Activated CD4-positive, alpha-beta T cell treated with anti-CD3 and anti-CD28 coated beads for 36 hours (primary cell): ENCODE measurements at regions of chr21 and their contacts with region 1.

Region 1: GRCh38 chr21:42238185-42238934 is 19.4 kb downstream of the ABCG1 start:
- DNase-seq: peak; percentile 61
- ATAC-seq: peak; percentile 7
- H3K4me3 Mint-ChIP-seq: peak overlapping the region; percentile 50
- H3K27ac Mint-ChIP-seq: peak overlapping the region; percentile 92
- H3K4me1 Mint-ChIP-seq: peaks cover 59% of the 10 kb centered on the region
- H3K27me3 Mint-ChIP-seq: no peaks in the 10 kb centered on the region

Region 2: GRCh38 chr21:42121794-42122193 is 116.6 kb before region 1 on chr21:
- CTCF ChIA-PET with region 1: no interaction called
- POLR2A ChIA-PET with region 1: no interaction called
- intact Hi-C with region 1: no loop called
- DNase-seq: no peak
- ATAC-seq: no peak
- H3K4me3 Mint-ChIP-seq: no peak overlapping the region
- H3K27ac Mint-ChIP-seq: no peak overlapping the region
- H3K4me1 Mint-ChIP-seq: peaks cover 15% of the 10 kb centered on the region
- H3K27me3 Mint-ChIP-seq: peaks cover 58% of the 10 kb centered on the region

Region 3: GRCh38 chr21:42164064-42164789 is 74.1 kb before region 1 on chr21:
- CTCF ChIA-PET with region 1: interaction called, 6 read pairs
- POLR2A ChIA-PET with region 1: interaction called, 3 read pairs
- intact Hi-C with region 1: loop called in 1 of 2 experiments (anchors 2 kb)
- DNase-seq: peak; percentile 79
- ATAC-seq: peak; percentile 72
- H3K4me3 Mint-ChIP-seq: no peak overlapping the region
- H3K27ac Mint-ChIP-seq: peak overlapping the region; percentile 17
- H3K4me1 Mint-ChIP-seq: peaks cover 31% of the 10 kb centered on the region
- H3K27me3 Mint-ChIP-seq: no peaks in the 10 kb centered on the region

Region 4: GRCh38 chr21:42187976-42188653 is 50.2 kb before region 1 on chr21:
- CTCF ChIA-PET with region 1: interaction called, 7 read pairs
- POLR2A ChIA-PET with region 1: interaction called, 5 read pairs
- intact Hi-C with region 1: loop called (anchors 1 kb)
- DNase-seq: peak; percentile 88
- ATAC-seq: peak; percentile 93
- H3K4me3 Mint-ChIP-seq: peak overlapping the region; percentile 57
- H3K27ac Mint-ChIP-seq: peak overlapping the region; percentile 95
- H3K4me1 Mint-ChIP-seq: peaks cover 65% of the 10 kb centered on the region
- H3K27me3 Mint-ChIP-seq: peaks cover 2% of the 10 kb centered on the region